Dendritic cell treated with granulocyte-macrophage colony-stimulating factor and Interleukin-4, amounts not matched to agents 40 ng/mL and 50 ng/mL, for 4 days (primary cell): ENCODE measurements at regions of chr11 and their contacts with region 1.

Region 1: DNA sequence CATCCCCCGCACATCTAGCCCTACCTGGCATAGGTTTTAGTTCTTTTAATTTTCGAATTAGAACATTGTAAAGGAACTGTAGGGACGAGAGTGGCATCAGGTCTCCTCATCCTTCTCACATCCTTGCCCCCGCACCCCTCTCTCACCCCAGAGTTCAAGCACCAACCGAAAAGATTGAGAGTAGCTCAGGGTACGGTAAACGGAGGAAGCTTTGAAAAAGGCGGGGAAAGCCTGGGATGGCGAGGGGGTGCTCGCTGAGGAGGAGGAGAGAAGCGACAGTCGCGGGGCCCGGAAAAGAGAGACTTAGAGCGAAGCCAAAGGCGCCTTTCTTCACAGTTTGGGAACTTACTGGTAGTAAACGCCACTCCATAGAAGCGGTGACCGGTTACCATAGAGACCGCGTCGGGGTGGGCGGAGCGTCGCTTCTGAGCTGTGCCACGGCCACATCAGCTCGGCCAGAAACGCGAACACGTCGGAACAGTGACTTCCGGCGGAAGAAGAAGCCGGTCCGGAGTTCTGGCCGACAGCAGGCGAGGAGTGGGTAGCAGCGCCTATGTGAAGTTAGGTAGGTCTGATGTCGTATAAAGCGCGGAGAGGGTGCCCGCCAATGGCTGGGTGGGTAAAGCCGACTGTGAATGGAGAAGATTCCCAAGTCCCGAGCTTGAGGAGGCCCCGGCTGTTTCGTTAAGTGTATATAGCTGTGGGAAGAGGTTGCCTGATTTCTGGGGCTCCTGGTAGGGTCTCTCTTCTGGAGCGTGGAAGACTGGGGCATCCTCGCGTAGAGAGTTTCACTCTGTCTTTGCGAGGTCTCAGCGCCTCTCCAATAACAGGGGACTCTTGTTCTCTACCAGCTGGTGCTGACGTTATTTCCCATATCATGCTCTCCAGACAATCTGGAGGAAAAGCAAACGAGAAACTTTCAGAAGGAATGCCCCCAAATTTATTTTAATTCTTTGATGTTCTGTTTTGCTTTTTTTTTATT is at the starts of genes DCDC1 and DNAJC24:
- H3K4me3 Mint-ChIP-seq: peak within 1 kb of the TSS; percentile 89
- H3K27ac Mint-ChIP-seq: peak within 1 kb of the TSS; percentile 91
- H3K4me1 Mint-ChIP-seq: peaks cover 10% of the 10 kb centered on the region
- H3K27me3 Mint-ChIP-seq: peaks cover 23% of the 10 kb centered on the region

Region 2: DNA sequence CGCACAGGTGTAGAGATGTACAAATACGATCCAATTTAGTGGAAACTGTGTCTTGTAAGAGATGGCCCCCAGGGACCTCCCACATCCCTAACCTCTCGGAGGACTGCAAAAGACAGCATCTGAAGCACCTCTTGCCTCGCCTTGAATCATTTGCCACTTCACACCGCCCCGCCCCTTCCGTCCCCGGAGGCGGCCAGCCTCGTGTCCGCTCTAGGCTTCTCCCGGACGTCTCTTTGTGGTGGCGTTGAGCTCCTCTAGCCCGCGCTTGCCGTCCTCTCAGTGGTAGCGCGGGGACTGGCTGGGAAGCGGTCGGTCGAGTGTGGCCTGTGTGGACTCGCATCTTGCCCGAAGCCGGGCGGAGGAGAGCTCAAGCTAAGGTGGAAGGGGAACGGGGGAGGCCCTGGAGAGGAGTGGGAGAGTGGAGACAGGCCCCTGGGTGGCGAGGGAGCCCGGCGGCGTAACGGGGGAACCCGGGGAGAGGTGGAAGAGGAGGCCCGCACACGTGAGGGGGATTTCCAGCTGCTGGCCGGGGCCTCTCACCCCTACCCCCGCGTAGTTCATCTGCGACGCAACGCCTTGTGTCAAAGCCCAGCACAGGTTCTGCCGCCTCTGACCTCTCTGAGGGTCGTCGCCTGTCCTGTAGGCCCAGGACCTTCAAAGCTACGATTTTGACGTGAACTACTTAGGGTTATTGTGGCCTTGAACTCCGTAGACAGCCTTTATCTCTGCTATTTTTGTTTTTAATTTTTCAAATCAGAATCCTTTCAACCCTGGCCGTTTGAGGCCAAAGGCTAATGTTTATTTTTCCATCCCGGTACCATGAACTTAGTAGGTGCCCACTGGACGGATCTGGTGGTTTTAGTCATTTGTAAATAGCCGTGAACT is 1046.6 kb before region 1 on chr11 and contains the start of gene ARL14EP:
- intact Hi-C with region 1: loop called (anchors 10 kb)
- H3K4me3 Mint-ChIP-seq: peak within 1 kb of the TSS; percentile 87
- H3K27ac Mint-ChIP-seq: peak within 1 kb of the TSS; percentile 96
- H3K4me1 Mint-ChIP-seq: peaks cover 23% of the 10 kb centered on the region
- H3K27me3 Mint-ChIP-seq: peaks cover 9% of the 10 kb centered on the region

Region 3: GRCh38 chr11:31509429-31510345 is 140.0 kb after region 1 on chr11 and contains the starts of genes ELP4 and IMMP1L:
- intact Hi-C with region 1: loop called (anchors 1 kb)
- H3K4me3 Mint-ChIP-seq: peak within 1 kb of the TSS; percentile 86
- H3K27ac Mint-ChIP-seq: peak within 1 kb of the TSS; percentile 90
- H3K4me1 Mint-ChIP-seq: peaks cover 5% of the 10 kb centered on the region
- H3K27me3 Mint-ChIP-seq: no peaks in the 10 kb centered on the region

Region 4: DNA sequence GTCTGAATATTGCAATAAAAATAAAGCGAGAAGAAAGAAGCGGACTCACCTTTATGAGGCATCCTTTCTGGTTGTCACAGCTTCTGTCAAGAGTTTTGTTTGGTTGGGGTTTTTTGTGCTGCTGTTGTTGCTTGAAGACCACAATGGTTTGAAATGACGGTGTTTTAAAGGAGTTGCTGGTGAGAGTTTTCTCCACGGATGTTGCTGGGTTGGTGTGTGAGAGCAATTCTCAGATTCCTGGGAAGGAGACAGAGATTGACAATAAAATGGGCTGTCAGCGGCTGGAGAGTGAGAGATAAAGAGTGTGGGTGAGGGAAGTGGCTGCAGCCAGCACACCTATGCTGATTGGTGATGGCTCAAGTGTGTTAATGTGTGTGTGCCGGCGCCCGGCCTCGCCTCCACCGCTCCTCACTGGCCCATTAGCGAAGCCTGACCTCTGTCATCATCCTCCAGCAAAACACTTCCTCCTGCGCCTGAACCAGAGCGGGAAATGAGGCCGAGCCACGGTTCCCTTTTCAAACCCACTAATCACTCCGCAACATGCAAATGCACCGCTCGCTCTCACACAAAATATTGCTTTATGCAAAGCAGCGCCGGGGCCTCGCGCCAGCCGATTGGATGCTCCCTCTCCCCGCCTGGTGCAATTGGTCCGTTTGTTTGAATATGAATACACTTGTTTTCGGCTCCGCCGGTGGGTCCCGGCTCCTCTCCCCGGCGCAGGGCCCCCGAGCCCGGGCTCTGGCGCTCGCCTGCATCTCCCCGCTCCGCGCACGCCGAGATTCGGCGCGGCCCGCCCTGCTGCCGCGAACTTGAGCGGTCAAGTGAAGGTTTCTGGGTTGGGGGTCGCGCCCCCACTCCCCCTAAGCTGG is 441.4 kb after region 1 on chr11 and contains the start of gene PAX6:
- intact Hi-C with region 1: loop called (anchors 10 kb)
- H3K4me3 Mint-ChIP-seq: peak within 1 kb of the TSS; percentile 73
- H3K27ac Mint-ChIP-seq: peak within 1 kb of the TSS; percentile 28
- H3K4me1 Mint-ChIP-seq: peaks cover 49% of the 10 kb centered on the region
- H3K27me3 Mint-ChIP-seq: peaks cover 95% of the 10 kb centered on the region

Region 5: GRCh38 chr11:32583459-32584271 is 1214.0 kb after region 1 on chr11 and contains the start of gene EIF3M:
- intact Hi-C with region 1: loop called (anchors 10 kb)
- H3K4me3 Mint-ChIP-seq: peak within 1 kb of the TSS; percentile 94
- H3K27ac Mint-ChIP-seq: peak within 1 kb of the TSS; percentile 96
- H3K4me1 Mint-ChIP-seq: peaks cover 31% of the 10 kb centered on the region
- H3K27me3 Mint-ChIP-seq: no peaks in the 10 kb centered on the region